AG04450 (cell line): ENCODE measurements at regions of chrX and their contacts with region 1.

Region 1: GRCh38 chrX:110847334-110847733 is 51.7 kb upstream of the CHRDL1 start:
- DNase-seq: peak; percentile 10
- H3K4me3 ChIP-seq: no peak overlapping the region
- H3K27ac ChIP-seq: no peak overlapping the region
- H3K27me3 ChIP-seq: no peaks in the 10 kb centered on the region
- CTCF ChIP-seq: peak; percentile 47

Region 2: DNA sequence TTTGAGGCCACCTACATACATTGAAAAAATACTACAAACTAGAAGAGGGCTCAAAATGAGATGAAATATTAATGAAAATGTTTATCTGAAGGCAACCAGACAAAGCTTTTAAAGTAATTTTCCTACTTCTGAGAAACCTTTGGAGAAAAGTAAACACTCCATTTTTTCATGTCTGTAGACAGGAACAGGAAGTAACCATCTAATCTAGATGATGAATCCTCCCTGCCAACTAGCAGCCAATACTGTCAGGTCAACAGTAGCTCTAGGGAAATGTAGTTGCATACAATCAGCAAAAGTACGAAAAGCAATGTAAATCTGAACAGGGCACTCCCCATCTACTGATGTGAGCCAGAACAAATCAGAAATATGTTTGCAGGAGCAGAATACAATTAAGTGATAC is 578.4 kb before region 1 on chrX:
- CTCF ChIA-PET with region 1: no interaction called
- POLR2A ChIA-PET with region 1: no interaction called
- DNase-seq: no peak
- H3K4me3 ChIP-seq: no peak overlapping the region
- H3K27ac ChIP-seq: no peak overlapping the region
- H3K27me3 ChIP-seq: no peaks in the 10 kb centered on the region
- CTCF ChIP-seq: no peak

Region 3: DNA sequence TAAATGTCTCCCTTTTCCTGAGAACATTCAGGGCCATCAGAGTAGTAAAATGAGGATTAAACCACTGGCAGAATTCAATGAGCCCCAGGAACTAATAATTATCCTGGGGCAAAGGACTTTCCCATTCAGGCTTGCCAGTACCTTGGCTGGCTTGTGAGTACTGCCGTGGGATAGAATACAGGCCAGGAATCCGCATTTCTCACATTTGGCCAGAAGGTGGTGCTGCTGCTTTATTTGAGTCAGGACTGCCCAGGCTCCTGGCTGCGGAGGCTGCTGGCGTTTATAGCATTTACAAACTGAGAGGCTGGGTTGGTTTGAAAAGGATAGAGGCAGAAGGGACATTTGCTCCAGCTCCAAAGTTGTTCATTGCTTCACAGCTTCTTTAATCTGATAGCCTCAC is 397.3 kb before region 1 on chrX:
- CTCF ChIA-PET with region 1: interaction called, 40 read pairs
- POLR2A ChIA-PET with region 1: no interaction called
- DNase-seq: peak; percentile 15
- H3K4me3 ChIP-seq: no peak overlapping the region
- H3K27ac ChIP-seq: no peak overlapping the region
- H3K27me3 ChIP-seq: peaks cover 5% of the 10 kb centered on the region
- CTCF ChIP-seq: peak; percentile 70

Region 4: GRCh38 chrX:110703641-110704040 is 143.7 kb before region 1 on chrX:
- CTCF ChIA-PET with region 1: no interaction called
- POLR2A ChIA-PET with region 1: no interaction called
- DNase-seq: no peak
- H3K4me3 ChIP-seq: no peak overlapping the region
- H3K27ac ChIP-seq: no peak overlapping the region
- H3K27me3 ChIP-seq: no peaks in the 10 kb centered on the region
- CTCF ChIP-seq: no peak